ENCODE measurements at regions of chr2 and their contacts with region 1.

Region 1: GRCh38 chr2:9538000-9538507 is 17.6 kb downstream of the ADAM17 start:
- H3K4me3 Mint-ChIP-seq: no peak overlapping the region
- H3K27ac Mint-ChIP-seq: peak overlapping the region; percentile 84
- H3K4me1 Mint-ChIP-seq: peaks cover 33% of the 10 kb centered on the region
- H3K27me3 Mint-ChIP-seq: no peaks in the 10 kb centered on the region

Region 2: GRCh38 chr2:9440058-9440727 is 97.9 kb before region 1 on chr2:
- intact Hi-C with region 1: no loop called
- H3K4me3 Mint-ChIP-seq: no peak overlapping the region
- H3K27ac Mint-ChIP-seq: no peak overlapping the region
- H3K4me1 Mint-ChIP-seq: no peaks in the 10 kb centered on the region
- H3K27me3 Mint-ChIP-seq: no peaks in the 10 kb centered on the region

Region 3: DNA sequence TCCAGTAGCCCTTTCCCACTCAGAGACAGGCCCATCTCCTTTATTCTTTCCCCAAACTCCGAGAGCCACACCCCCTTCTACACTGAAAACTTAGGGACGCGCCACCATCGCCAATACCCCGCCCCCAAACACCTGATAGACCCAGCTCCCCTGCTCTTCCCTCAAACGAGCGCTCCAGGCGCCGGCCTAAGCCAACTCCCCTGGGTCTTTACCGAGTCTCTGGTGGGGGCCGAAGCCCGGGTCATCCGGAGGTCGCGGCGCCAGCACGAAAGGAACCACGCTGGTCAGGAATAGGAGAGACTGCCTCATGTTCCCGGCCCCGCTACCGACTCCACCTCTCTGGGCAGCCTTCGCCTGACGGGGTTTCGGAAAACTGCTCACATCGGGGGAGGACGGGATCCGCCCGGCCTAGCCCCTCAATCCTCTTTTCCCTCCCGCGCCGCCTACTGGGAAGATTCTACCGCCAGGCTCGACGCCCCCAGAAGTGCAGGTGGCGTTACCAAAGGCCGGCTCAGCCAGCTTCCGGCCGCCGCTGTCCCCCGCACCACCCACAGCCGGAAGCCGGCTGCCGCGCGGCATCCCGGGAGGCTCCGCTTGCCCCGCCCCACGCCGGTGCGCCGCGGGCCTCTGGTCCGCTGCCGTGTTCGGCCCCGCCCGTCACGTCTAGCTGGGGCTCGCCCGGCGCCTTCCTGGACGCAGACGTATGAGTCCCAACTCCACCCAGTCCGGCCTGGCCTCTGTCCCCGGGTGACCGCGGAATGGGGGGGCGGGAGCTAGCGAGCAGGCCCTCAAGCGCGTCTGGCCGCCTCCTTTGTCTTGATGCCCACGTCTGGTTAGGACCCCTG is 17.5 kb after region 1 on chr2 and contains the start of gene ADAM17:
- intact Hi-C with region 1: loop called (anchors 1 kb)
- H3K4me3 Mint-ChIP-seq: peak within 1 kb of the TSS; percentile 95
- H3K27ac Mint-ChIP-seq: peak within 1 kb of the TSS; percentile 95
- H3K4me1 Mint-ChIP-seq: peaks cover 32% of the 10 kb centered on the region
- H3K27me3 Mint-ChIP-seq: no peaks in the 10 kb centered on the region

Measured in dendritic cell treated with granulocyte-macrophage colony-stimulating factor and Interleukin-4, amounts not matched to agents 40 ng/mL and 50 ng/mL, for 4 days (primary cell).